CD4-positive, alpha-beta memory T cell (primary cell): ENCODE measurements at regions of chr14 and their contacts with region 1.

Region 1: GRCh38 chr14:24442273-24443052 is at the start of gene SDR39U1:
- DNase-seq: peak; percentile 95 to 99 (median 98)
- H3K4me3 ChIP-seq: peak within 1 kb of the TSS; percentile 73 to 85
- H3K4me3 Mint-ChIP-seq: peak within 1 kb of the TSS; percentile 87 to 97 (median 92)
- H3K27ac ChIP-seq: peak within 1 kb of the TSS; percentile 93
- H3K27ac Mint-ChIP-seq: peak within 1 kb of the TSS; percentile 93 to 99 (median 99)
- H3K4me1 ChIP-seq: peaks cover 27% of the 10 kb centered on the region
- H3K4me1 Mint-ChIP-seq: peaks cover 20 to 57% (median 41%) of the 10 kb centered on the region in 4 donors
- H3K27me3 ChIP-seq: no peaks in the 10 kb centered on the region
- H3K27me3 Mint-ChIP-seq: no peaks in the 10 kb centered on the region
- total RNA-seq, gene SDR39U1: 102 to 109 TPM

Region 2: GRCh38 chr14:23469127-23469905 is 973.1 kb before region 1 on chr14 and contains the start of gene NGDN:
- CTCF ChIA-PET with region 1: no interaction called
- POLR2A ChIA-PET with region 1: no interaction called
- intact Hi-C with region 1: loop called (anchors 10 kb)
- DNase-seq: peak; percentile 93 to 99 (median 97)
- H3K4me3 ChIP-seq: peak within 1 kb of the TSS; percentile 75 to 78
- H3K4me3 Mint-ChIP-seq: peak within 1 kb of the TSS in 1 of 8 donors; percentile 35
- H3K27ac ChIP-seq: peak within 1 kb of the TSS; percentile 89
- H3K27ac Mint-ChIP-seq: peak within 1 kb of the TSS in 3 of 7 donors; percentile 36 to 78 (median 43)
- H3K4me1 ChIP-seq: peaks cover 17% of the 10 kb centered on the region
- H3K4me1 Mint-ChIP-seq: peaks cover 0 to 7% (median 6%) of the 10 kb centered on the region in 4 donors
- H3K27me3 ChIP-seq: no peaks in the 10 kb centered on the region
- H3K27me3 Mint-ChIP-seq: no peaks in the 10 kb centered on the region
- total RNA-seq, gene NGDN: 60.7 to 63.5 TPM

Region 3: GRCh38 chr14:24232121-24232644 is 210.3 kb before region 1 on chr14 and contains the start of gene NEDD8:
- CTCF ChIA-PET with region 1: no interaction called
- POLR2A ChIA-PET with region 1: no interaction called
- intact Hi-C with region 1: loop called (anchors 1 kb)
- DNase-seq: peak; percentile 89 to 96 (median 89)
- H3K4me3 ChIP-seq: peak within 1 kb of the TSS; percentile 100
- H3K4me3 Mint-ChIP-seq: peak within 1 kb of the TSS; percentile 97 to 99 (median 98)
- H3K27ac ChIP-seq: peak within 1 kb of the TSS; percentile 88
- H3K27ac Mint-ChIP-seq: peak within 1 kb of the TSS; percentile 95 to 99 (median 97)
- H3K4me1 ChIP-seq: peaks cover 41% of the 10 kb centered on the region
- H3K4me1 Mint-ChIP-seq: peaks cover 41 to 68% (median 54%) of the 10 kb centered on the region in 4 donors
- H3K27me3 ChIP-seq: no peaks in the 10 kb centered on the region
- H3K27me3 Mint-ChIP-seq: no peaks in the 10 kb centered on the region
- total RNA-seq, gene NEDD8: 116 to 127 TPM

Region 4: GRCh38 chr14:24481622-24482324 is 39.3 kb after region 1 on chr14:
- CTCF ChIA-PET with region 1: interaction called, 3 read pairs
- POLR2A ChIA-PET with region 1: interaction called, 17 read pairs
- intact Hi-C with region 1: no loop called
- DNase-seq: peak in 4 of 5 donors; percentile 18 to 38 (median 25)
- H3K4me3 ChIP-seq: no peak overlapping the region
- H3K4me3 Mint-ChIP-seq: peak overlapping the region in 5 of 8 donors; percentile 38 to 61 (median 51)
- H3K27ac ChIP-seq: no peak overlapping the region
- H3K27ac Mint-ChIP-seq: peak overlapping the region in 4 of 7 donors; percentile 4 to 57 (median 26)
- H3K4me1 ChIP-seq: peaks cover 17% of the 10 kb centered on the region
- H3K4me1 Mint-ChIP-seq: peaks cover 0 to 29% (median 20%) of the 10 kb centered on the region in 4 donors
- H3K27me3 ChIP-seq: no peaks in the 10 kb centered on the region
- H3K27me3 Mint-ChIP-seq: no peaks in the 10 kb centered on the region

Region 5: DNA sequence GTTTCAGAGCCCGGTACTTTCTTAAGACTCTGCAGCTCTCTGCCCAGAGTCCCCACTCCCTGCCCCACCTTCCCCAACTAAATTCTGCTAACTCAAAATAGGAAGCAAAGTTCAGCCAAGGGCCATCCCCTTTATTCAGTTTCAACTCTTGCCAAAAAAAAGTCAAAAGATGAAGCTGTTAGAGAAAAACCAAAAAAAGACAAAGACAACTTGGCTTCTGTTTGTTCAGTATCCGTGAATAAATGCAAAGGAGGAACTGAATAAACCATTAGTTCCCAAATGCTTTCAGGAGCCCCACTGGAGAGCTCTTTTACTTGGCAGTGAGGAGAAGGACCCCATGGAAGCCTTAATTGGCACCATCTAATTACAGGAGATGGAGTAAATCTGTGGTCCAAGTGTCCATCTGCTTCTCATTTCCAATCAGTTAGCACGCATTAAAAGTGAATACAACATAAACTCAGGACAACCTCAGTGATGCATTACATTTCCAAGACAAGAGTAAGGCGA is 347.0 kb after region 1 on chr14:
- CTCF ChIA-PET with region 1: no interaction called
- POLR2A ChIA-PET with region 1: no interaction called
- intact Hi-C with region 1: no loop called
- DNase-seq: no peak
- H3K4me3 ChIP-seq: no peak overlapping the region
- H3K4me3 Mint-ChIP-seq: no peak overlapping the region
- H3K27ac ChIP-seq: no peak overlapping the region
- H3K27ac Mint-ChIP-seq: no peak overlapping the region
- H3K4me1 ChIP-seq: no peaks in the 10 kb centered on the region
- H3K4me1 Mint-ChIP-seq: no peaks in the 10 kb centered on the region
- H3K27me3 ChIP-seq: no peaks in the 10 kb centered on the region
- H3K27me3 Mint-ChIP-seq: peaks cover 12 to 13% of the 10 kb centered on the region in 2 donors